GM10248 (cell line): ENCODE measurements at regions of chr12 and their contacts with region 1.

Region 1: GRCh38 chr12:6647083-6647604 is at the start of gene ACRBP:
- DNase-seq: peak; percentile 78
- CTCF ChIP-seq: no peak

Region 2: GRCh38 chr12:6620137-6620884 is 26.8 kb before region 1 on chr12:
- CTCF ChIA-PET with region 1: interaction called, 19 read pairs
- POLR2A ChIA-PET with region 1: no interaction called
- DNase-seq: no peak
- CTCF ChIP-seq: peak; percentile 19

Region 3: DNA sequence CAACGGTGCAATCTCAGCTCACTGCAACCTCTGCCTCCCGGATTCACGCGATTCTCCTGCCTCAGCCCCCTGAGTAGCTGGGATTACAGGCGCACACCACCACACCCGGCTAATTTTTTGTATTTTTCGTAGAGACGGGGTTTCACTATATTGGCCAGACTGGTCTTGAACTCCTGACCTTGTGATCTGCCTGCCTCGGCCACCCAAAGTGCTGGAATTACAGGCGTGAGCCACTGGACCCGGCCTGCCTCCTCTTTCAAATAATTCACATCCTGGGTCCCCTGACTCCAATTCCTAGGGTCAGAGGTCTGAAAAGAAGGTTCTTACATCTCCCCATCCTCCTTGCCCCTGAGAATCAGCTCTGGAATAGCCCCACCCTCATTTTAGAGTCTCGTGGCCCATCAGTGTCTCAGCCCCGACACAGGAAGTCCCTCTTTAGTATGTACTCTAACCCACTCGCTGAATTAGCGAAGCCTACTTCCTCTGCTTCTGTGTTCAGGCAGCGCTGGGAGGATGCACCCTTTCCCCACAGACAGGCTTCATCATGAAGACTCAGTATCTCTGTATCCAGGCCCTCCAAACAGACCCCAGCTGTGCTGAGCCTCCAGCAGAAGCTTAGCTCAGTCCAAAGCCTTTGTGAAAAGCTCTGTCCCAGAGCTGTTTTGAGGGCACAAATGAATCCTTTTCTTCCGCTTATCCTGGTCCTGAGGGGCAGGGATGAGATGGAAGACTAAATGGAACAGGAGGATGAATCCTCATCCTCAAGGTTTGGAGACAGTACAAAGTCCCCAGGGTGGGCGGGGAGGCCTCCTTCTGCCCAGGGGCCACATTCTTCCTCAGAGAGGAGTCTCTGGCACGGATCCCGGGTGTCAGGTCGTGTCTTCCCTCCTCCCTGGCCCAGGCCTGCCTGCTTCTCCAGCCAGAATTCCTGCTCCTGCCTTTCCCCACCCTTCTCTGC is 14.8 kb before region 1 on chr12:
- CTCF ChIA-PET with region 1: interaction called, 12 read pairs
- POLR2A ChIA-PET with region 1: interaction called, 6 read pairs
- DNase-seq: peak; percentile 71
- CTCF ChIP-seq: no peak

Region 4: GRCh38 chr12:6662906-6663742 is 16.0 kb after region 1 on chr12 and contains the start of gene ING4:
- CTCF ChIA-PET with region 1: interaction called, 19 read pairs
- POLR2A ChIA-PET with region 1: no interaction called
- DNase-seq: peak; percentile 97
- CTCF ChIP-seq: no peak